A673 (cell line): ENCODE measurements at regions of chr15 and their contacts with region 1.

Region 1: DNA sequence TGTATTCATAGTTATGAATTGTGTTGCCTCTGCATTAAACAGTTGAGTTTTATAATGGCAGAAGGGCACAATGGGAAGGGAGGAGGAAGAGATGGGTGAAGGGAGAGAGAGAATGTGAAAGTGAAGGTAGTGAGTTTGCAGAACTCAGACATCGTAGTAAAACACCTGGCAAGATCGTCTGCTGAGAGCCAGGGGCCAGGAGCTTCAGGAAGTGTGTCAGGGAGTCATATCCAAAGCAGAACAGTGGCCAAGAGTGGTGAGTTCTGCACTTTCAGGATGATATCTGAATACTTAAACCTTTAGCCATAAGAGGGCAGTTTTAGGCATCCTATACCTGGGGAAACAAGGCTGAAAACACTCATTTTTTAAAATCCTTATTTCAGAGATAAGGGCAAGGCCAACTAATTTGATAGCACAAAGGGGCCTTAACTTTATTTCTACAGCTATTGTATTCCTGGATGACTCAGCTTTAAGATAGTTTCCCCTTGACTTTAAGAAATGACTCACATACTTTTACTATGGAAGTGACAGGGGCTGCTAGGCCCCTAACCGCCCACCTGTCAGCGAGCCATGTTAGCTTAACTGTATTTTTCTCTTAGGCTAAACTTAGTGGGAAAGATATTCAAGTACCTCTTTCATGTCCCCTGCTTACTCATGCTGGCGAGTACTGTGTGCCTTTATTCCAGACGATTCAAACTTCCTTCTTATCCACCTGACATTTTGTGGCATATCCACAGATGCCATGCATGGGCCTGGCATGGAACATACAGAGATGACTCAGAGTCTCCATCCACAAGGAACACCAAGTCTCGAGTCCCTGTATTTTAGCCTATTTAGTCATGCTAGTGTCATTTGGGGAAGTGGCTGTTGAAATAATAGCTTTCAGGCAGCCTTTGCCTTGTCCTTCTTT is 53.9 kb downstream of the RLBP1 start:
- DNase-seq: peak; percentile 34
- H3K4me3 ChIP-seq: no peak overlapping the region
- H3K27ac ChIP-seq: no peak overlapping the region
- H3K4me1 ChIP-seq: peaks cover 50% of the 10 kb centered on the region
- H3K27me3 ChIP-seq: no peaks in the 10 kb centered on the region
- CTCF ChIP-seq: no peak

Region 2: DNA sequence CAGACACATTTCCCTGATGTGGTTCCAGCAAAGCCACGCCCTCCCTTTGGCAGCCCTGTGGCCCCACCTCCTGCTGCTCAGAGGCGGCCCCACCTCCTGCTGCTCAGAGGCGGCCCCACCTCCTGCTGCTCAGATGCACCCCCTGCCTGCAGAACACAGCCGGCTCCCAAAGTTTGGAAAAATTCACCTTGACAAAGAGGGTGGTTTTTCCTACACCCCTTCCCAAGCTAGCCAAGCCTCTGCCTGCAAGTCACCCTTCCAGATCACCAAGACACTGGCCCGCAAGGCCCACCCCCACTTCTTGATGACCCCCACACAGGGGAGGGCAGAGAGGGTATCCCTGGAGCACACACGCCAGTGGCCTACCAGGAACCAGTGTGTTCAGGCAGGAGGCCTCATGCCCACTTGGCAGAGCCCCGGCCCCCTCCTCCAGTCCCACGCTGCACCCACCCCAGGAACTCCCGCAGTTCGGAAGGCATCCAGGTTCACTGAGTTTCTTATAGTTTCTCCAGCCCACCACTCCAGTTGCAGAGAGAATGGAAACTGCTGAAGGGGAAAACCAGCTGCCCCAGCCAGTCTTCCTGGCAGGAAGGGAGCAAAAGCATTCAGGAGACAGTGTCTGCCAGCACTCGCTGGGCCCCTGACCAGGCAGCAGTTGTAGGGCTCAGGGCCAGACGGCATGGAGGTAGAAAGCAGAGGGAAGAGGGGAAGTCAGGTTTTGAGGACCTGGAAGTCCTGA is 269.9 kb before region 1 on chr15:
- CTCF ChIA-PET with region 1: no interaction called
- POLR2A ChIA-PET with region 1: no interaction called
- intact Hi-C with region 1: loop called (anchors 5 kb)
- DNase-seq: peak; percentile 73
- H3K4me3 ChIP-seq: no peak overlapping the region
- H3K27ac ChIP-seq: peak overlapping the region; percentile 54
- H3K4me1 ChIP-seq: peaks cover 14% of the 10 kb centered on the region
- H3K27me3 ChIP-seq: no peaks in the 10 kb centered on the region
- CTCF ChIP-seq: peak; percentile 55